Activated CD8-positive, alpha-beta T cell treated with anti-CD3 and anti-CD28 coated beads for 36 hours (primary cell): ENCODE measurements at regions of chr11 and their contacts with region 1.

Region 1: DNA sequence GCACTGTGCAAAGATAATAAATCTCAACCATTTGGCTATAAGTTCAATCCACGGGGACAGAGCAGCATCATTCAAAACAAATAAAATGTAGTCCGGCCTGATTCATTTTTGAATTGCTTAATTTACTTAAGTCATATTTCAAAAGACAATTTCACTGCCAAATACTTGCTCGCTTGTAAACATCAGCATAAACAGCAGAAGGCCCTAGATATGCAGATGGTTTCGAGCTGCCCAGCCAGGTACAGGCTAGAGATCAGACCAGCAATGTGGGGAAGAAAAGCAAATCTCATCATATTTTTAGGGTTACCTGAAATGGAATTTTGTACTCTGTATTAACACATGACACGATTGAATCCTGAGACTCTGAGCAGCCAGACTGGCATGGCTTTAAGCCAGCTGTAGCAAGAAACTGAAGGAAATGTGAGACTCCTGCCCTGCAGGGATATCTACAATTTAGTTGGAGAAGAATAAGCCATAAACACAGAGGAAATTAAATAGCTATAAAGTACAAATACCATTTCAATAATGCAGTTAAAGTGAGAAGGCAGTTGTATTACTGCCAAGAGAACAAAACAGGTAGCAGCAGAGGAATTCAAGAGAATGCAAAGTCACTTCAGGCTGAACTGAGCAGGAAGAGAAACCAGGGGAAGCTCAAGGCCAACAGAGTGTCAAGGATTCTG is 440.3 kb downstream of the ETS1 start:
- DNase-seq: no peak
- ATAC-seq: no peak
- H3K4me3 Mint-ChIP-seq: no peak overlapping the region
- H3K27ac Mint-ChIP-seq: no peak overlapping the region
- H3K4me1 Mint-ChIP-seq: no peaks in the 10 kb centered on the region
- H3K27me3 Mint-ChIP-seq: no peaks in the 10 kb centered on the region
- CTCF ChIP-seq: no peak

Region 2: DNA sequence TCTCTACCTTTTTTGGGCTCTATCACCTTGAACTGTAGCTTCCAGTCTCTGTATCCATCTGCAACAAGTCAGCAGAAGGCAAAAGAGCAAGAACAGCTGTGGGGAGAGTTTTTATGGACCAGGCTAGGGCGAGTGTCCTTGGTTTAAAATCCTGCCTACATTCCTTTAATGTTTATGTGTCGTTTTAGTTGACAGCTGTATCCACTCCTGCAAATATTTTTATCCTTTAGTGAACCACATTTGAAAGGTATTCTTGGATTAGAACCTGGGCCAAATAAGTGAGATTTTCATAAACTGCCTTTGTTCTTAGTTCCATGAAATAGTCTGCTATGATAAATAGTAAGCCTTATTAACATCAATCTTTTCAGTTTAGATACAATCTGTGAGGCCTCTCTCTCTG is 271.9 kb before region 1 on chr11:
- CTCF ChIA-PET with region 1: no interaction called
- POLR2A ChIA-PET with region 1: no interaction called
- intact Hi-C with region 1: no loop called
- DNase-seq: no peak
- ATAC-seq: no peak
- H3K4me3 Mint-ChIP-seq: no peak overlapping the region
- H3K27ac Mint-ChIP-seq: no peak overlapping the region
- H3K4me1 Mint-ChIP-seq: no peaks in the 10 kb centered on the region
- H3K27me3 Mint-ChIP-seq: peaks cover 12% of the 10 kb centered on the region
- CTCF ChIP-seq: no peak

Region 3: GRCh38 chr11:128026596-128026995 is 120.5 kb before region 1 on chr11:
- CTCF ChIA-PET with region 1: interaction called, 12 read pairs
- POLR2A ChIA-PET with region 1: no interaction called
- intact Hi-C with region 1: no loop called
- DNase-seq: no peak
- ATAC-seq: no peak
- H3K4me3 Mint-ChIP-seq: no peak overlapping the region
- H3K27ac Mint-ChIP-seq: no peak overlapping the region
- H3K4me1 Mint-ChIP-seq: peaks cover 6% of the 10 kb centered on the region
- H3K27me3 Mint-ChIP-seq: no peaks in the 10 kb centered on the region
- CTCF ChIP-seq: no peak

Region 4: GRCh38 chr11:128105950-128106349 is 41.1 kb before region 1 on chr11:
- CTCF ChIA-PET with region 1: no interaction called
- POLR2A ChIA-PET with region 1: no interaction called
- intact Hi-C with region 1: loop called (anchors 5 kb)
- DNase-seq: no peak
- ATAC-seq: no peak
- H3K4me3 Mint-ChIP-seq: no peak overlapping the region
- H3K27ac Mint-ChIP-seq: no peak overlapping the region
- H3K4me1 Mint-ChIP-seq: peaks cover 13% of the 10 kb centered on the region
- H3K27me3 Mint-ChIP-seq: peaks cover 2% of the 10 kb centered on the region
- CTCF ChIP-seq: no peak